ENCODE measurements at regions of chr12 and their contacts with region 1.

Region 1: DNA sequence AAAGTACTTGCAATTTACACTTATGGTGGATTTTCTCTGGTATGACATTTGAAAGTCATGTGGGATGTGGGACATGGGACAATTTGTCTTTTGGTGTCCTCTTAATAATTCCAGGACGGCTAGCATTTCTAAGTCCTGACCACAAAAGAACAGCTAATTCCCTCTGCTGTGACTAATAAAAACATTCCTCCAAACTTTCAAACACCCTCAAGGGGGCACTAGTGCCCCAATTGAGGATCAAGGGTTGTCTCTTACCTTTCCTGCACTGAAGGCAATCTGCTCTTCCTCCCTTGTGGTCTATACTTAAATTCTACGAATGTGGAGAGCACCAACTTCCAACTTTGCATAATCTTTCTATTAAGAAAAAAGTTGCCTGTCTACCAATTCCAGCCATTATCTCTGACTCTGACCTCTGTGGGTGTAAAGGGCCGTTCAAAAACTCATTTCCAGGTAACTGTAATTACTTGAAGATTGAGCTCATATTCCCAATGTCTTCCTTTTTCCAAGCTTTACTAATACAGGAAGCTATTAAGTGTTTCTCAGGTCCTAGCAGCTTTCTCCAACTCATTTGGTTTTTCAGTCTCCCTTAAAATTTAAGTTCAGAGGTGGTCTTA is 210.2 kb downstream of the PTPRO start:
- DNase-seq: peak; percentile 76
- ATAC-seq: peak; percentile 84
- H3K4me3 ChIP-seq: no peak overlapping the region
- H3K4me3 Mint-ChIP-seq: no peak overlapping the region
- H3K27ac ChIP-seq: no peak overlapping the region
- H3K27ac Mint-ChIP-seq: no peak overlapping the region
- H3K4me1 ChIP-seq: peaks cover 15 to 16% of the 10 kb centered on the region in 2 donors
- H3K4me1 Mint-ChIP-seq: peaks cover 17% of the 10 kb centered on the region
- H3K27me3 ChIP-seq: no peaks in the 10 kb centered on the region
- H3K27me3 Mint-ChIP-seq: no peaks in the 10 kb centered on the region
- CTCF ChIP-seq: peak; percentile 85

Region 2: DNA sequence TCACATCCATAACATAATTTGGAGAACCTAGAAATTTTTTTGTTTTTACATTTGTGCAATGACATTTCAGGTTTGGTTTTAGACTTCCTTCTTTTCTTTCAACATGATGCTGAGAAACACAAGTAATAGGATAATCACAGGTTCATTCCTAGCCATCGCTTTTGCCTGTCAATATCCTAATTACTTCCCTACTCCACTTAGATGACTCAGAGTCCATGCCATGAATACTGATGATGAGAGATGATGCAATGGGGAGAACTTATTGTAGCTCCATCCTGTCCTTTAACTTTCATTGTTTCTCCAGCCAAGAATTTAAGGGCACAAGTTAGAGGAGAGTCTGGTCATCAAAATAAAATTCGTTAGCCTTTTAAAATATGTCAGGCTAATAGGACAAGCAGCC is 108.8 kb before region 1 on chr12:
- CTCF ChIA-PET with region 1: no interaction called
- POLR2A ChIA-PET with region 1: no interaction called
- intact Hi-C with region 1: no loop called
- DNase-seq: no peak
- ATAC-seq: no peak
- H3K4me3 ChIP-seq: no peak overlapping the region
- H3K4me3 Mint-ChIP-seq: no peak overlapping the region
- H3K27ac ChIP-seq: no peak overlapping the region
- H3K27ac Mint-ChIP-seq: no peak overlapping the region
- H3K4me1 ChIP-seq: no peaks in the 10 kb centered on the region
- H3K4me1 Mint-ChIP-seq: no peaks in the 10 kb centered on the region
- H3K27me3 ChIP-seq: no peaks in the 10 kb centered on the region
- H3K27me3 Mint-ChIP-seq: peaks cover 8% of the 10 kb centered on the region
- CTCF ChIP-seq: no peak

Region 3: GRCh38 chr12:15546102-15546701 is 13.7 kb after region 1 on chr12:
- CTCF ChIA-PET with region 1: interaction called, 141 read pairs
- POLR2A ChIA-PET with region 1: interaction called, 9 read pairs
- intact Hi-C with region 1: loop called (anchors 1 kb)
- DNase-seq: peak; percentile 74
- ATAC-seq: peak; percentile 80
- H3K4me3 ChIP-seq: peak overlapping the region; percentile 33 to 74 (median 51)
- H3K4me3 Mint-ChIP-seq: peak overlapping the region; percentile 84
- H3K27ac ChIP-seq: peak overlapping the region; percentile 89 to 99
- H3K27ac Mint-ChIP-seq: peak overlapping the region; percentile 100
- H3K4me1 ChIP-seq: peaks cover 34 to 44% of the 10 kb centered on the region in 2 donors
- H3K4me1 Mint-ChIP-seq: peaks cover 59% of the 10 kb centered on the region
- H3K27me3 ChIP-seq: no peaks in the 10 kb centered on the region
- H3K27me3 Mint-ChIP-seq: no peaks in the 10 kb centered on the region
- CTCF ChIP-seq: no peak

Region 4: DNA sequence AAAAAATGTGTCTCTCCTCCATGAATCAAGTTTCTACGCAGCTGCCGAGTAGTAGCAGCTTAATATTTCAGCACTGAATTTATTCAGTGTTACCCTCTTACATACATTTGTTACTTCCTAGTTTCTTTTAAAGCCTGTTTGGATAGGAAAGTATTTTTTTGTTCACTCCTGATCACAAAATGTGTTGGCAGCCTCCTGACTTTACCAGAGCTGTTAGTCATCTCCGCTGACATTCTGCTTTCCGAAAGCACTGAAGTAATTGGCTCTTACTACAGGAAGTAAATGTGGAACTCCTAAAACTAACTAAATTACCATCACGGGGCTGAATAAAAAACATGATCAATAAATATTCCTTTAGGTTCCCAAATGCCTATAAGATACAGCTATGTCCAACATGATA is 31.2 kb after region 1 on chr12:
- CTCF ChIA-PET with region 1: interaction called, 55 read pairs
- POLR2A ChIA-PET with region 1: no interaction called
- intact Hi-C with region 1: no loop called
- DNase-seq: peak; percentile 42
- ATAC-seq: peak; percentile 64
- H3K4me3 ChIP-seq: peak overlapping the region in 4 of 5 experiments; percentile 18 to 51 (median 35)
- H3K4me3 Mint-ChIP-seq: peak overlapping the region; percentile 78
- H3K27ac ChIP-seq: peak overlapping the region; percentile 28 to 46
- H3K27ac Mint-ChIP-seq: peak overlapping the region; percentile 23
- H3K4me1 ChIP-seq: peaks cover 3 to 5% of the 10 kb centered on the region in 2 donors
- H3K4me1 Mint-ChIP-seq: peaks cover 22% of the 10 kb centered on the region
- H3K27me3 ChIP-seq: no peaks in the 10 kb centered on the region
- H3K27me3 Mint-ChIP-seq: no peaks in the 10 kb centered on the region
- CTCF ChIP-seq: no peak

Region 5: DNA sequence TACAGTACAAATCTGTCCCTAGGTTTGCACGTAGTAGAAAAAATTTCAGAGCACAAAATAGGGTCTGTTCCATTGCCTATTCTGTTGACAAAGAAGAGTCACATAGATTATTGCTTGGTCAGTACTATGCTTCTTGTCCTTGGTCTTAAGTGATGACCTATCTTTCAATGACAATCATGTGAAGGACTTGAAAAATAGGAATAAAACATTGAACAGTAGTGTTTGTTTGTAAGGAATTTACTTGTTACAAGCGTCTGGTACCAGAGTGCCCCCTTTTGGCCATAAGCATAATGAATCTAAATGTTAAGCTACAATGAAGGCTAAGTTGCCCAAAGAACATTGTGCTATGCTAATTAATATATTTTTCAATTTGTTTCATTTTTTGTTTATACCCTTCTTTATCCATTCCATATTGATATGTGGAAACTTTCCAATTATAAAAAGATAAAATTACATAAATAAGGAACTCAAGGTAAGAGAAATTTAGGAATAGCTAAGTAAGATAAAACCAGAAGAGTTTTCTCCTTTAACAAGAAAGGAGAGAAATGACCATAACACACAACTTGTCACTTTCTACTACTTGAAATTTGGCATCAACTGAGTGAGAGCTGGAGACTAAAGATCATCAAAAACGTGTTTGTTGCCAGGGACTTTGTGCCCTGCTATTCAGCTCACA is 52.0 kb after region 1 on chr12:
- CTCF ChIA-PET with region 1: interaction called, 702 read pairs
- POLR2A ChIA-PET with region 1: interaction called, 4 read pairs
- intact Hi-C with region 1: loop called (anchors 1 kb)
- DNase-seq: peak; percentile 76
- ATAC-seq: peak; percentile 63
- H3K4me3 ChIP-seq: no peak overlapping the region
- H3K4me3 Mint-ChIP-seq: no peak overlapping the region
- H3K27ac ChIP-seq: no peak overlapping the region
- H3K27ac Mint-ChIP-seq: peak overlapping the region; percentile 65
- H3K4me1 ChIP-seq: no peaks in the 10 kb centered on the region
- H3K4me1 Mint-ChIP-seq: no peaks in the 10 kb centered on the region
- H3K27me3 ChIP-seq: no peaks in the 10 kb centered on the region
- H3K27me3 Mint-ChIP-seq: no peaks in the 10 kb centered on the region
- CTCF ChIP-seq: peak; percentile 86

Region 6: GRCh38 chr12:15662983-15663659 is 130.7 kb after region 1 on chr12:
- CTCF ChIA-PET with region 1: no interaction called
- POLR2A ChIA-PET with region 1: no interaction called
- intact Hi-C with region 1: no loop called
- DNase-seq: no peak
- ATAC-seq: no peak
- H3K4me3 ChIP-seq: no peak overlapping the region
- H3K4me3 Mint-ChIP-seq: no peak overlapping the region
- H3K27ac ChIP-seq: no peak overlapping the region
- H3K27ac Mint-ChIP-seq: no peak overlapping the region
- H3K4me1 ChIP-seq: no peaks in the 10 kb centered on the region
- H3K4me1 Mint-ChIP-seq: no peaks in the 10 kb centered on the region
- H3K27me3 ChIP-seq: no peaks in the 10 kb centered on the region
- H3K27me3 Mint-ChIP-seq: peaks cover 12% of the 10 kb centered on the region
- CTCF ChIP-seq: no peak

Region 7: GRCh38 chr12:15789220-15790171 is 257.0 kb after region 1 on chr12 and contains the start of gene EPS8:
- CTCF ChIA-PET with region 1: interaction called, 7 read pairs
- POLR2A ChIA-PET with region 1: no interaction called
- intact Hi-C with region 1: loop called (anchors 5 kb)
- DNase-seq: peak; percentile 93
- ATAC-seq: peak; percentile 95
- H3K4me3 ChIP-seq: peak within 1 kb of the TSS; percentile 47 to 86 (median 72)
- H3K4me3 Mint-ChIP-seq: peak within 1 kb of the TSS; percentile 87
- H3K27ac ChIP-seq: peak within 1 kb of the TSS in 1 of 2 donors; percentile 13
- H3K27ac Mint-ChIP-seq: peak within 1 kb of the TSS; percentile 64
- H3K4me1 ChIP-seq: peaks cover 15 to 16% of the 10 kb centered on the region in 2 donors
- H3K4me1 Mint-ChIP-seq: peaks cover 15% of the 10 kb centered on the region
- H3K27me3 ChIP-seq: peaks cover 0 to 51% (median 37%) of the 10 kb centered on the region in 4 experiments
- H3K27me3 Mint-ChIP-seq: peaks cover 53% of the 10 kb centered on the region
- CTCF ChIP-seq: no peak
- total RNA-seq, gene EPS8: 0.78 and 0.96 TPM in 2 replicates

Region 8: DNA sequence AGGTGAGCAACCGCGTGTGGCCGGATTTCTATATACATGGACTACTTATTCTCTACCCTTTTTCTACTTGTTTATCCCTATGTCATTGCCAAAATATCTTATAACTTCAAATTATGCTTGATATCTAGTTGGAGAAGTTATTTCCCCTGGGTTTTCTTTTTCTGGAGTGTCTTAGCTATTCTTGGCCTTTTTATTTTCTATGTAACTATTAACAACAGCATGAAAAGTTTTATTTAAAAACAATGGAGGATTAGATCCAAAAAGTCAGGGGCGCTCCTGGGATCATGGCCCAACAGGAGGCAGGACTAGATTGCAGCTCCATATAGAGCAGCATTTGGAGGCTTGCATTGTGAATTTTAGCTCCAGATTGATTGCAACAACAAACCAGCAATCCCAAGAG is 341.1 kb after region 1 on chr12:
- CTCF ChIA-PET with region 1: no interaction called
- POLR2A ChIA-PET with region 1: no interaction called
- intact Hi-C with region 1: no loop called
- DNase-seq: no peak
- ATAC-seq: no peak
- H3K4me3 ChIP-seq: no peak overlapping the region
- H3K4me3 Mint-ChIP-seq: no peak overlapping the region
- H3K27ac ChIP-seq: no peak overlapping the region
- H3K27ac Mint-ChIP-seq: no peak overlapping the region
- H3K4me1 ChIP-seq: no peaks in the 10 kb centered on the region
- H3K4me1 Mint-ChIP-seq: peaks cover 7% of the 10 kb centered on the region
- H3K27me3 ChIP-seq: no peaks in the 10 kb centered on the region
- H3K27me3 Mint-ChIP-seq: no peaks in the 10 kb centered on the region
- CTCF ChIP-seq: no peak

Region 9: GRCh38 chr12:15899282-15899870 is 366.9 kb after region 1 on chr12:
- CTCF ChIA-PET with region 1: interaction called, 11 read pairs
- POLR2A ChIA-PET with region 1: no interaction called
- intact Hi-C with region 1: loop called (anchors 1 kb)
- DNase-seq: peak; percentile 59
- ATAC-seq: peak; percentile 36
- H3K4me3 ChIP-seq: no peak overlapping the region
- H3K4me3 Mint-ChIP-seq: no peak overlapping the region
- H3K27ac ChIP-seq: peak overlapping the region in 1 of 2 donors; percentile 45
- H3K27ac Mint-ChIP-seq: peak overlapping the region; percentile 34
- H3K4me1 ChIP-seq: no peaks in the 10 kb centered on the region
- H3K4me1 Mint-ChIP-seq: peaks cover 3% of the 10 kb centered on the region
- H3K27me3 ChIP-seq: no peaks in the 10 kb centered on the region
- H3K27me3 Mint-ChIP-seq: no peaks in the 10 kb centered on the region
- CTCF ChIP-seq: peak; percentile 95